Activated B cell treated with CpG ODN at 0.5 μM for 24 hours (primary cell): ENCODE measurements at regions of chr18 and their contacts with region 1.

Region 1: DNA sequence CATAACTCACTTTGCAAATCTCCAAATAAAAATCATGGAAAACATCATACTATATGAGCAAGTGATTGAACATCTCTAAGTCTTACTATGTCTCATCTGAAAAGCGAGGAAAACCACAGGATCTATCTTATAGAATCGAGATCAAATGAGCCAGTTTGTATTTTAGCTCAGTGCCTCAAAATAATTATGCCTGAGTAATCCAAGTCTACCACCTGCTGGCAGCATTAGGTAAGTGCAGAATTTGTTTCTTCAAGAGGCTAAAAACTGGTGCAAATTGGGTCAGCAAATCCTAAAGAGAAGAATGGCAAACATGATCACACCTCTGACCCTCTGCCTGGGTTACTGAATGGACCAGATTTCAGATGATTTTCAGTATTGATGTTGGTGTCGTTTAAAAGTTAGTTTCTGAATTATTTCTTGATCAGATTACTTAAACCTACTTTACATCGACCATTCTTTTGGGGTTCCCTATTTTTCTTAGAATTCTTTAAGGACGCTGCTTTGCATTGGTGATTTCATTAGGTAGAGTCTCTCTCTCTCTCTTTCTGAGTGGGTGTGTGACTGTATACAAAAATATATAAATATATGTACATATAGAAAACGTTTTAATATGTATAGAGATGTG is 12.7 kb upstream of the FHOD3 start:
- DNase-seq: no peak
- ATAC-seq: peak; percentile 64
- H3K4me3 Mint-ChIP-seq: no peak overlapping the region
- H3K27ac Mint-ChIP-seq: no peak overlapping the region
- H3K4me1 Mint-ChIP-seq: peaks cover 2% of the 10 kb centered on the region
- H3K27me3 Mint-ChIP-seq: peaks cover 38% of the 10 kb centered on the region
- CTCF ChIP-seq: peak; percentile 72

Region 2: DNA sequence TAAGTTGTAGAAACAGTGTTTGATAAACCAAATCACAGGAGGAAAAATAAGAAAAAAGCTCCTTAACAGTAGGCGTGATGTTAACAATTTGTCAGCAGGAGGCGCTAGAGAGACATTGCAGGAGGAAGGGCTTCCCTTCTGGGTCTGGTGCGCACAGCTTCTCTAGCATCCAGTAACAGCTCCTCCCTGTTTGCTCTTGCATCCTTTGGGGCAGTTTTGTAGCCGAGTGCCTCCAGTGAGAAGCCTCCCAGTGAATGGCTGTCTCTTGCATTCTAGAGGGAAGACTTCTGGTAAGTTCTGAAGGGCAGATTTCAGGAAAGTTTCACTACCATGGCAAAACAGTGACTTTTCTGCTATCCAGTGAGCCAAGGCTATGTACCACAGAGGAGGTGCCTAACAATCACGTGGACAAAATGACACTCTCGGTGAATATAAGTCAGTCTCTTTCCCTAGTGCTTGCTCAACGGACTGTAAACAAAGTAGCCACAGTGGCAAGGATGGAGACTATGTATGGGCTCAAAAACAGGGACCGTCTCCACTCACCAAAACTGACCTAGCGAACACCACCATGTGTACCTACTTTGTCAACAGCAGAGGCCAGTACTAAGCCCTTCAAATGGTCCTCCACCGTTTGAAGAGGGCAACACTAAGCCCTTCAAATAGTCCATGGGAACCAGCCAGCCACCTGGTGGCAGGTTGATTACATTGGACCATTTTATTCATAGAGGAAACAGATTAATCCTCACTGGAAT is 898.0 kb before region 1 on chr18:
- CTCF ChIA-PET with region 1: interaction called, 9 read pairs
- POLR2A ChIA-PET with region 1: no interaction called
- intact Hi-C with region 1: loop called (anchors 1 kb)
- DNase-seq: no peak
- ATAC-seq: peak; percentile 95
- H3K4me3 Mint-ChIP-seq: no peak overlapping the region
- H3K27ac Mint-ChIP-seq: no peak overlapping the region
- H3K4me1 Mint-ChIP-seq: peaks cover 6% of the 10 kb centered on the region
- H3K27me3 Mint-ChIP-seq: peaks cover 18% of the 10 kb centered on the region
- CTCF ChIP-seq: no peak

Region 3: GRCh38 chr18:35564795-35565453 is 719.9 kb before region 1 on chr18:
- CTCF ChIA-PET with region 1: no interaction called
- POLR2A ChIA-PET with region 1: no interaction called
- intact Hi-C with region 1: no loop called
- DNase-seq: no peak
- ATAC-seq: peak; percentile 28
- H3K4me3 Mint-ChIP-seq: peak overlapping the region; percentile 55
- H3K27ac Mint-ChIP-seq: peak overlapping the region; percentile 61
- H3K4me1 Mint-ChIP-seq: peaks cover 20% of the 10 kb centered on the region
- H3K27me3 Mint-ChIP-seq: no peaks in the 10 kb centered on the region
- CTCF ChIP-seq: no peak

Region 4: DNA sequence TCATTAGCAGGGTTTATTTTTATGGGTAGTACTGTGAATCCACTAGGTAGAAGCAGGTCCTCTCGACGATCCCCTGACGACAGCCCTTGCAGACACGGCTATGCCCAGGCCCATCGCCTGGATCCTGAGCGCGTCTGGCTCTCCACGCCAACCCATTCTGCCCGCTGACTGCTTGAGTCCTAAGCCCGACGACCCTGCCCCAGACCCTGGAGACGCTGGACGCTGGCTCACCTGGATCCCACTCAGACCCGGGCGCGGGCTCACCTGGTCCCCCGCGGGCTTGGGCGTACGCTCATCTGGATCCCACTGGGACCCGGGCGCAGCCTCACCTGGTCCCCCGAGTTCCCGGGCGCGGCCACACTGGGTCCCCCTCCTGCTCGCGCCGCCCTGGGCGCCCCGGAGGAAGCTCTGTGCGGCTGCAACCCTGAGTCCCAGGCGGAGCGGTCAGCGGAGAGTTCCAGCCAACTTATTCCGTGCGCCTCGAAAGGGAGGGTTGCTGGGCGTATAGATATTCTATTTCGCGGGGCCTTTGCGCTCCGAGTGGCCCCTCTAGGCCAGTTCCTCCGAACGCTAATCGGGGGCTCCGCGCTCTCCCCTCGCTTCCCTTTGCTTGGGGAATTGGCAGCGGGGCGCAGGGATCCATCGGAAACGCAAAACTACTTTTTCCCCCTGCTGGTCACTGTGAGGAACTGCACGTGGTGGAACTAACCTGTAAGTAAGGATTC is 334.7 kb before region 1 on chr18:
- CTCF ChIA-PET with region 1: interaction called, 7 read pairs
- POLR2A ChIA-PET with region 1: no interaction called
- intact Hi-C with region 1: loop called (anchors 1 kb)
- DNase-seq: peak; percentile 43
- ATAC-seq: peak; percentile 85
- H3K4me3 Mint-ChIP-seq: peak overlapping the region; percentile 82
- H3K27ac Mint-ChIP-seq: no peak overlapping the region
- H3K4me1 Mint-ChIP-seq: peaks cover 8% of the 10 kb centered on the region
- H3K27me3 Mint-ChIP-seq: peaks cover 27% of the 10 kb centered on the region
- CTCF ChIP-seq: peak; percentile 98

Region 5: DNA sequence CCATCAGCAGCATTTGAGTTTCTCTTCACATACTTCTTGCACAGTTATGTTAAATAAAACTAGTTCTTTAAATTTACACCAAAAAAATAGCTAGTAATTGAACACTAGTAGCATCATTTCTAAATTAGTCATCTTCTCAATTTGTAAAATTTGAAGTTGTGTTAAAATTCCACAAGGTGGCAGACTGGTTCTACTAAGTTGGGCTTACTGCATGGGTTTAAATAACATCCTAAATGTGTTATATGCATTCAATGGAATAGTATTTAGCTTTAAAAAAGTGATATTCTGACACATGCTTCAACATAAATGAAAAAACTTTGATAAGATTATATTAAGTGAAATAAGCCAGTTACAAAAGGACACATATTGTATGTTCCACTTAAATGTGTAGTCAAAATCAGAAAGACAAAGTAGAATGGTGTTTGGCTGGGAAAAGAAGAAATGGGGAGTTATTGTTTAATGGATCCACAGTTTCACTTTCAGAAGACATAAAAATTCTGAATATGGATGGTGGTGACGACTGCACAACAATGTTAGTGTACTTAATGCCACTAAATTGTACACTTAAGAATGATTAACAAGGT is 188.8 kb before region 1 on chr18:
- CTCF ChIA-PET with region 1: interaction called, 142 read pairs
- POLR2A ChIA-PET with region 1: no interaction called
- intact Hi-C with region 1: loop called (anchors 1 kb)
- DNase-seq: no peak
- ATAC-seq: no peak
- H3K4me3 Mint-ChIP-seq: no peak overlapping the region
- H3K27ac Mint-ChIP-seq: no peak overlapping the region
- H3K4me1 Mint-ChIP-seq: no peaks in the 10 kb centered on the region
- H3K27me3 Mint-ChIP-seq: peaks cover 5% of the 10 kb centered on the region
- CTCF ChIP-seq: no peak

Region 6: GRCh38 chr18:36419905-36420531 is 135.2 kb after region 1 on chr18:
- CTCF ChIA-PET with region 1: no interaction called
- POLR2A ChIA-PET with region 1: no interaction called
- intact Hi-C with region 1: no loop called
- DNase-seq: no peak
- ATAC-seq: peak; percentile 31
- H3K4me3 Mint-ChIP-seq: no peak overlapping the region
- H3K27ac Mint-ChIP-seq: no peak overlapping the region
- H3K4me1 Mint-ChIP-seq: no peaks in the 10 kb centered on the region
- H3K27me3 Mint-ChIP-seq: peaks cover 13% of the 10 kb centered on the region
- CTCF ChIP-seq: no peak